Right ventricle myocardium inferior (tissue), 1 donor: ENCODE measurements at regions of chr16 and their contacts with region 1.

Region 1: GRCh38 chr16:24776501-24777220 is 47.2 kb downstream of the TNRC6A start:
- DNase-seq: peak; percentile 69
- ATAC-seq: peak; percentile 79

Region 2: GRCh38 chr16:24729985-24730815 is 46.5 kb before region 1 on chr16:
- intact Hi-C with region 1: loop called (anchors 5 kb)
- DNase-seq: no peak
- ATAC-seq: no peak

Region 3: DNA sequence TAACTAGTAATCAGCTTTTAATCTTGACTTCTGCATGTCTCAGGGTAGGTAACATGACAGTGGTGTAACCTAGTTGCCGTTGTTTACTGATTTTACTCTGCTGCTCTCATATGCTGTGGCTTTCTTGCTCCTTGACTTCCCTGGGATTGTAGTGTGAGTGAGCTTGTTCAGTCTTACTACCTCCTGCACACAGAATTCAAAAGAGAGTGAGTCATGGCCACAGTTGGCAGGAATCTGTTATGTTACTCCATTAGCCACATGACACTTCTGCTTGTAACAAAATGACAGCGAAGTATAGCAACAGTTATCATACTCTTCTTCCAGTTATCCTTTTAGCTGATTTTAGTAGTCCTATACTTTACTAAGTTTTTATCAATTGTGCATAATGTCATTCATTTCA is 28.4 kb before region 1 on chr16:
- intact Hi-C with region 1: loop called (anchors 1 kb)
- DNase-seq: no peak
- ATAC-seq: peak; percentile 90

Region 4: GRCh38 chr16:24820522-24820921 is 43.9 kb after region 1 on chr16:
- intact Hi-C with region 1: no loop called
- DNase-seq: no peak
- ATAC-seq: no peak

Region 5: GRCh38 chr16:25298165-25298872 is 521.7 kb after region 1 on chr16:
- intact Hi-C with region 1: no loop called
- DNase-seq: no peak
- ATAC-seq: no peak